ENCODE measurements at regions of chr17 and their contacts with region 1.

Region 1: DNA sequence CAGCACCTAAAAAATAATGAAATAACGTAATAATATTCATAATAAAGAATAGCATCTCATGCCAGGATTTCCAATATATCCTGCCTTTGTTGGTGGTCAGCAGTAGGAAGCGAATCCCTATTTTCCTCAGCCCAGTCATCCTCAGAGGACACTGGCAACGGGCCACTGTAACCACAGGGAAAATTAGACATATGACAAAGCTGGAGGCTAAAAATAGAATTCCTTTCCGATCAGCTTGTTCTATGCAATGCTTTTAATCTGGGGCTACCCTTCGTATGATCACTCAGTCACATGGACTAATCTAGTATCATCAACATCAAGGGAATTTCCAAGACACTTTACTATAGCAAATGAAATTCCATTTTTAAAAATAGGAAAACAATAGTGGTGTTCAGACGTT is 246.9 kb upstream of the KCNJ16 start:
- DNase-seq: peak; percentile 97
- H3K4me3 ChIP-seq: peak overlapping the region in 1 of 3 experiments; percentile 12
- H3K27ac ChIP-seq: peak overlapping the region; percentile 89
- H3K4me1 ChIP-seq: peaks cover 20% of the 10 kb centered on the region
- H3K27me3 ChIP-seq: no peaks in the 10 kb centered on the region
- CTCF ChIP-seq: no peak
- POLR2A ChIP-seq: no peak

Region 2: GRCh38 chr17:69672924-69673323 is 155.2 kb before region 1 on chr17:
- CTCF ChIA-PET with region 1: no interaction called
- POLR2A ChIA-PET with region 1: no interaction called
- dilution Hi-C with region 1: no loop called
- intact Hi-C with region 1: loop called (anchors 1 kb)
- DNase-seq: peak; percentile 81
- H3K4me3 ChIP-seq: no peak overlapping the region
- H3K27ac ChIP-seq: peak overlapping the region; percentile 70
- H3K4me1 ChIP-seq: peaks cover 18% of the 10 kb centered on the region
- H3K27me3 ChIP-seq: no peaks in the 10 kb centered on the region
- CTCF ChIP-seq: no peak
- POLR2A ChIP-seq: peak; percentile 65

Region 3: GRCh38 chr17:69761751-69762321 is 66.3 kb before region 1 on chr17:
- CTCF ChIA-PET with region 1: no interaction called
- POLR2A ChIA-PET with region 1: no interaction called
- dilution Hi-C with region 1: no loop called
- intact Hi-C with region 1: loop called (anchors 5 kb)
- DNase-seq: peak; percentile 86
- H3K4me3 ChIP-seq: no peak overlapping the region
- H3K27ac ChIP-seq: peak overlapping the region; percentile 91
- H3K4me1 ChIP-seq: peaks cover 21% of the 10 kb centered on the region
- H3K27me3 ChIP-seq: no peaks in the 10 kb centered on the region
- CTCF ChIP-seq: no peak
- POLR2A ChIP-seq: no peak

Region 4: GRCh38 chr17:69857412-69857835 is 29.3 kb after region 1 on chr17:
- CTCF ChIA-PET with region 1: interaction called, 4 read pairs
- POLR2A ChIA-PET with region 1: no interaction called
- dilution Hi-C with region 1: no loop called
- intact Hi-C with region 1: loop called (anchors 1 kb)
- DNase-seq: peak; percentile 95
- H3K4me3 ChIP-seq: no peak overlapping the region
- H3K27ac ChIP-seq: peak overlapping the region; percentile 35
- H3K4me1 ChIP-seq: peaks cover 14% of the 10 kb centered on the region
- H3K27me3 ChIP-seq: no peaks in the 10 kb centered on the region
- CTCF ChIP-seq: no peak
- POLR2A ChIP-seq: peak; percentile 53

Region 5: GRCh38 chr17:70040336-70040735 is 212.2 kb after region 1 on chr17:
- CTCF ChIA-PET with region 1: no interaction called
- POLR2A ChIA-PET with region 1: no interaction called
- dilution Hi-C with region 1: no loop called
- intact Hi-C with region 1: loop called (anchors 1 kb)
- DNase-seq: peak; percentile 94
- H3K4me3 ChIP-seq: no peak overlapping the region
- H3K27ac ChIP-seq: peak overlapping the region; percentile 90
- H3K4me1 ChIP-seq: peaks cover 29% of the 10 kb centered on the region
- H3K27me3 ChIP-seq: no peaks in the 10 kb centered on the region
- CTCF ChIP-seq: no peak
- POLR2A ChIP-seq: no peak

Region 6: GRCh38 chr17:70158180-70158579 is 330.1 kb after region 1 on chr17:
- CTCF ChIA-PET with region 1: no interaction called
- POLR2A ChIA-PET with region 1: interaction called, 3 read pairs
- dilution Hi-C with region 1: no loop called
- intact Hi-C with region 1: loop called (anchors 1 kb)
- DNase-seq: peak; percentile 97
- H3K4me3 ChIP-seq: peak overlapping the region; percentile 27 to 77 (median 47)
- H3K27ac ChIP-seq: peak overlapping the region; percentile 100
- H3K4me1 ChIP-seq: peaks cover 44% of the 10 kb centered on the region
- H3K27me3 ChIP-seq: no peaks in the 10 kb centered on the region
- CTCF ChIP-seq: no peak
- POLR2A ChIP-seq: no peak

Measured in endothelial cell of umbilical vein (primary cell).